ENCODE measurements at regions of chr15 and their contacts with region 1.

Region 1: GRCh38 chr15:75453703-75454470 is 2.4 kb upstream of the SIN3A start:
- DNase-seq: peak; percentile 93
- ATAC-seq: peak; percentile 38
- H3K4me3 Mint-ChIP-seq: peak overlapping the region; percentile 93
- H3K27ac Mint-ChIP-seq: peak overlapping the region; percentile 97
- H3K4me1 Mint-ChIP-seq: peaks cover 41% of the 10 kb centered on the region
- H3K27me3 Mint-ChIP-seq: no peaks in the 10 kb centered on the region
- CTCF ChIP-seq: no peak

Region 2: GRCh38 chr15:73633111-73633990 is 1820.5 kb before region 1 on chr15 and contains the start of gene NPTN:
- CTCF ChIA-PET with region 1: no interaction called
- POLR2A ChIA-PET with region 1: no interaction called
- intact Hi-C with region 1: loop called (anchors 10 kb)
- DNase-seq: peak; percentile 96
- ATAC-seq: peak; percentile 90
- H3K4me3 Mint-ChIP-seq: peak within 1 kb of the TSS; percentile 85
- H3K27ac Mint-ChIP-seq: peak within 1 kb of the TSS; percentile 57
- H3K4me1 Mint-ChIP-seq: peaks cover 53% of the 10 kb centered on the region
- H3K27me3 Mint-ChIP-seq: peaks cover under 1% of the 10 kb centered on the region
- CTCF ChIP-seq: no peak
- total RNA-seq, gene NPTN: 36.1 and 39.0 TPM in 2 replicates

Region 3: GRCh38 chr15:74540761-74541493 is 913.0 kb before region 1 on chr15 and contains the start of gene ARID3B:
- CTCF ChIA-PET with region 1: no interaction called
- POLR2A ChIA-PET with region 1: interaction called, 6 read pairs
- intact Hi-C with region 1: loop called (anchors 2 kb)
- DNase-seq: peak; percentile 79
- ATAC-seq: peak; percentile 86
- H3K4me3 Mint-ChIP-seq: peak within 1 kb of the TSS; percentile 98
- H3K27ac Mint-ChIP-seq: peak within 1 kb of the TSS; percentile 95
- H3K4me1 Mint-ChIP-seq: peaks cover 49% of the 10 kb centered on the region
- H3K27me3 Mint-ChIP-seq: no peaks in the 10 kb centered on the region
- CTCF ChIP-seq: no peak
- total RNA-seq, gene ARID3B: 24.8 and 26.9 TPM in 2 replicates

Region 4: GRCh38 chr15:74565381-74566085 is 888.4 kb before region 1 on chr15:
- CTCF ChIA-PET with region 1: no interaction called
- POLR2A ChIA-PET with region 1: no interaction called
- intact Hi-C with region 1: no loop called
- DNase-seq: no peak
- ATAC-seq: no peak
- H3K4me3 Mint-ChIP-seq: no peak overlapping the region
- H3K27ac Mint-ChIP-seq: no peak overlapping the region
- H3K4me1 Mint-ChIP-seq: peaks cover 7% of the 10 kb centered on the region
- H3K27me3 Mint-ChIP-seq: no peaks in the 10 kb centered on the region
- CTCF ChIP-seq: no peak

Region 5: GRCh38 chr15:75023181-75023871 is 430.6 kb before region 1 on chr15 and contains the start of gene PPCDC:
- CTCF ChIA-PET with region 1: no interaction called
- POLR2A ChIA-PET with region 1: interaction called, 4 read pairs
- intact Hi-C with region 1: loop called (anchors 5 kb)
- DNase-seq: peak; percentile 82
- ATAC-seq: peak; percentile 100
- H3K4me3 Mint-ChIP-seq: peak within 1 kb of the TSS; percentile 95
- H3K27ac Mint-ChIP-seq: peak within 1 kb of the TSS; percentile 86
- H3K4me1 Mint-ChIP-seq: peaks cover 9% of the 10 kb centered on the region
- H3K27me3 Mint-ChIP-seq: peaks cover 6% of the 10 kb centered on the region
- CTCF ChIP-seq: no peak
- total RNA-seq, gene PPCDC: 13.5 and 16.6 TPM in 2 replicates

Region 6: DNA sequence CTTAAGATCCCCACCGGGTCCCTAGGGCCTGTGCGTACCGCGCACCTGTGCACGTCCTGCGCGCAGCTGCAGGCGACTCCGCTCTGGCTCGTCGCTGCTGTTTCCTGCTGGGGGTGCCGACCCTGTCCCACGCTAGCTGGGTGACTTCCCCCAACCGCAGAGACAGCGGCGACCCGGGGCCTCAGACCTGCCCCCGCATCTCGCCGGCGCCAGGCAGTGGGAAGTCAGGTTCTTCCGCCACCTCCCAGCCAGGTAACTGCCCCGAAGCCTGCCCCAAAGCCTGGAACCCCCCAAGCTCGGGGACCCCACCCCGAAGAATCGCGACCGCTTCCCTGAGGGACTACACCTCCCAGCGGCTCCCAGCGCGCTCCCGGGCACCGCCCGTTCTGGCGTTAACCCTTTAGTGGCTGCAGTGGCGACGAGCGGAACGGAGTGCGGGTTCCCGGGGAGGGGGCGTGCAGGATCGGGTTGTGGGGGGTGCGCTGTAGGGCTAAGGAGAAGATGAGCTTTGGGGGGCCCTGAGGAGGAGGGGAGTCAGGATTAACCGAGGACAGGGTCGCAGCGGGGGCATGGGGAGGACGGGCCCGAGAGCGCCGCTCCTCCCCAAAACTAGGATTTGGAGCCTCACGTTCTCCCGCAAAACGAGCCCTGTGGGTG is 106.5 kb before region 1 on chr15:
- CTCF ChIA-PET with region 1: no interaction called
- POLR2A ChIA-PET with region 1: interaction called, 7 read pairs
- intact Hi-C with region 1: loop called (anchors 5 kb)
- DNase-seq: peak; percentile 69
- ATAC-seq: peak; percentile 77
- H3K4me3 Mint-ChIP-seq: peak overlapping the region; percentile 86
- H3K27ac Mint-ChIP-seq: peak overlapping the region; percentile 85
- H3K4me1 Mint-ChIP-seq: peaks cover 46% of the 10 kb centered on the region
- H3K27me3 Mint-ChIP-seq: peaks cover 1% of the 10 kb centered on the region
- CTCF ChIP-seq: no peak

Region 7: DNA sequence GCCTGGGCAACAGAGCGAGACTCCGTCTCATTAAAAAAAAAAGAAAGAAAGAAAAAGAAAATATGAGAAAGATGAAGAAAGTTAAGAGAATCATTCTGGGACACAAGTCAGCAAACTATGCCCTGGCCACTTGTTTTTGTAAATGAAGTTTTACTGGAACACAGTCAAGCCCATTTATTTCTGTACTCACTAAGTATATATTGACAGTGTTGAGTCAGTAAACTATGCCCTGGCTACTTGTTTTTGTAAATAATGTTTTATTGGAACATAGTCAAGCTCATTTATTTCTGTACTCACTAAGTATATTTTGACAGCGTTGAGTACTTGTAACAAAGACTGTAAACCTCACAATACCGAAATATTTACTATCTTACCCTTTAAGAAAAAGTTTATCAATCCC is 39.8 kb after region 1 on chr15:
- CTCF ChIA-PET with region 1: no interaction called
- POLR2A ChIA-PET with region 1: interaction called, 12 read pairs
- intact Hi-C with region 1: no loop called
- DNase-seq: no peak
- ATAC-seq: no peak
- H3K4me3 Mint-ChIP-seq: no peak overlapping the region
- H3K27ac Mint-ChIP-seq: no peak overlapping the region
- H3K4me1 Mint-ChIP-seq: no peaks in the 10 kb centered on the region
- H3K27me3 Mint-ChIP-seq: no peaks in the 10 kb centered on the region
- CTCF ChIP-seq: no peak

Region 8: DNA sequence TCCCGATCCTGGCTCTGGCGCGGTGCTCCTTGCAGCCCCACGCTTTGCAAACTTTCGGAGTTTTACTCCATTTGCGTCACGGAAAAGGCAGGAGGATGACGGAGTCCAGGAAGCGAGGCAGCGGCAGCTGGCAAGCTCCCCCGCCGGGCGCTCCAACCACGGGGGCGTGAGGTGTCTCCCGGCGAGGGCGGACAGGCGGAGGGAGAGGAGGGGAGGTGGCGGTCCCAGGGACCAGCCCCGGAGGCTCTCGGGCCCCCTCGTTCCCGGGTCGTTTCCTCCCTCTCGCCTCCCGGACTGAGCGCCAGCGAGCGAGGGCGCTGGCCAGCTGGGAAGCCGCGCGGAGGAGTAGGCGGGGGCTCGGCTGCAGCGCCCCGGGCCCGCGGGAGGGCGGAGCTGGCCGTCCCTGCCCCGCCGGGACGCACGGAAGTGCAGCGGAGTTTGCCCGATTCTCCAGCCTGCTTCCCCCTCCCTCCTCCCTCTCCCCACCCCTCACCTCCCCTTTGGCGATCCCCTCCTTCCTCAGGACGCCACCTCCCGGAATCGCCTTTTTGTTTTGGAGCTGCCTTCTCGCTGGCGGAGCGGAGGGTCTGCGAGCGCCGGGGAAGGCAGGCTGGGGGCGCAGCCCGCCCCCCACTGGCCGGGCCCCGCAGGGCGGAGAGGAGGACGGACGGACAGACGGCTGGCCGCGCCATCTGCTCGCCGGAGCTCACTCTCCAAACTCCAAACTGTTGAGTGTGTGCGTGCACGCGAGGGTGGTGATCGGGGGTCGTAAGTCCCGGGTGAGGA is 193.7 kb after region 1 on chr15 and contains the start of gene SNX33:
- CTCF ChIA-PET with region 1: interaction called, 3 read pairs
- POLR2A ChIA-PET with region 1: interaction called, 11 read pairs
- intact Hi-C with region 1: no loop called
- DNase-seq: peak; percentile 46
- ATAC-seq: peak; percentile 70
- H3K4me3 Mint-ChIP-seq: peak within 1 kb of the TSS; percentile 85
- H3K27ac Mint-ChIP-seq: peak within 1 kb of the TSS; percentile 16
- H3K4me1 Mint-ChIP-seq: peaks cover 8% of the 10 kb centered on the region
- H3K27me3 Mint-ChIP-seq: peaks cover 18% of the 10 kb centered on the region
- CTCF ChIP-seq: no peak
- total RNA-seq, gene SNX33: 0.22 and 0.34 TPM in 2 replicates